ENCODE measurements at regions of chr1 and their contacts with region 1.

Region 1: GRCh38 chr1:220511768-220512167 is 16.2 kb upstream of the MARK1 start:
- DNase-seq: no peak
- ATAC-seq: no peak
- H3K4me3 ChIP-seq: no peak overlapping the region
- H3K27ac ChIP-seq: no peak overlapping the region
- H3K4me1 ChIP-seq: no peaks in the 10 kb centered on the region
- H3K27me3 ChIP-seq: peaks cover 0 to 3% (median 0%) of the 10 kb centered on the region in 3 donors
- CTCF ChIP-seq: no peak

Region 2: DNA sequence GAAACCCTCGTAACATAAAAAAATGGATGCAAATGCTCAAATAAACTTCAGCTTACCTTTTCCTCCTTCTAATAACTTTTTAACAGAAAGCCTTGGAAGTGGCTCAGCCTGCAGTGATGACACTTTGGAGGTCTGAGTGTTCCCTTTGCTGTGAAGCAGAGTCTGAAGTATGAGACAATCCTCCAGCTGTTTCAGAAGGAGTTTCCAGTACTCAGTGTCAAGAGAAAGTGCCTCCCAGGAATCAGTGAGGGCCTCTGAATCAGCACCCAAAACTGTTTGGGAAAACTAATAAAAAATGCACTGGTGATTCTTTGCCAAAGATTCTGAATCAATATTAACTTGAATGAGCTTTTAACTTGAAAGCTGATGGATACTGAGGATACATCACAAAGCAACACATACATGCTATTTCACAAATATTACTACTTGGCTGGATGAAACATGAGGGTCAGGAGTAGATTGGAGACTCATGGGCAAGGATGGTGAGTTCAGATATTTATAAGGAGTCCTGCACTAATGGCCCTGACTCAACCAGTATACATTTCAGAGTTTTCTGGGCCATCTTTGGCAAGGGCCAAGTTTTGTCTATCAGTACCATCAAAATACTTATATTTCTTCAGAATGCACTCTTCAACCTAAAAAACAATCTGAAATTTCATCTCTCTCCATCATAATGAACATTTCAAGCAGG is 340.8 kb before region 1 on chr1:
- intact Hi-C with region 1: no loop called
- DNase-seq: no peak
- ATAC-seq: no peak
- H3K4me3 ChIP-seq: no peak overlapping the region
- H3K27ac ChIP-seq: no peak overlapping the region
- H3K4me1 ChIP-seq: no peaks in the 10 kb centered on the region
- H3K27me3 ChIP-seq: no peaks in the 10 kb centered on the region
- CTCF ChIP-seq: no peak

Region 3: GRCh38 chr1:220441211-220441610 is 70.6 kb before region 1 on chr1:
- intact Hi-C with region 1: no loop called
- DNase-seq: no peak
- ATAC-seq: no peak
- H3K4me3 ChIP-seq: no peak overlapping the region
- H3K27ac ChIP-seq: no peak overlapping the region
- H3K4me1 ChIP-seq: peaks cover 4% of the 10 kb centered on the region
- H3K27me3 ChIP-seq: no peaks in the 10 kb centered on the region
- CTCF ChIP-seq: no peak

Region 4: GRCh38 chr1:220500372-220500771 is 11.4 kb before region 1 on chr1:
- intact Hi-C with region 1: loop called in 1 of 2 experiments (anchors 1 kb)
- DNase-seq: no peak
- ATAC-seq: no peak
- H3K4me3 ChIP-seq: no peak overlapping the region
- H3K27ac ChIP-seq: no peak overlapping the region
- H3K4me1 ChIP-seq: no peaks in the 10 kb centered on the region
- H3K27me3 ChIP-seq: no peaks in the 10 kb centered on the region
- CTCF ChIP-seq: no peak

Measured in psoas muscle (tissue), 8 donors.